ENCODE measurements at regions of chr4 and their contacts with region 1.

Region 1: GRCh38 chr4:145732895-145733880 is 53.2 kb downstream of the C4orf51 start:
- DNase-seq: peak; percentile 95
- H3K4me3 ChIP-seq: peak overlapping the region; percentile 45 to 60
- H3K27ac ChIP-seq: peak overlapping the region; percentile 97 to 98
- H3K4me1 ChIP-seq: peaks cover 30% of the 10 kb centered on the region
- H3K27me3 ChIP-seq: no peaks in the 10 kb centered on the region
- CTCF ChIP-seq: peak in 2 of 4 experiments; percentile 31 to 37
- POLR2A ChIP-seq: peak; percentile 75

Region 2: DNA sequence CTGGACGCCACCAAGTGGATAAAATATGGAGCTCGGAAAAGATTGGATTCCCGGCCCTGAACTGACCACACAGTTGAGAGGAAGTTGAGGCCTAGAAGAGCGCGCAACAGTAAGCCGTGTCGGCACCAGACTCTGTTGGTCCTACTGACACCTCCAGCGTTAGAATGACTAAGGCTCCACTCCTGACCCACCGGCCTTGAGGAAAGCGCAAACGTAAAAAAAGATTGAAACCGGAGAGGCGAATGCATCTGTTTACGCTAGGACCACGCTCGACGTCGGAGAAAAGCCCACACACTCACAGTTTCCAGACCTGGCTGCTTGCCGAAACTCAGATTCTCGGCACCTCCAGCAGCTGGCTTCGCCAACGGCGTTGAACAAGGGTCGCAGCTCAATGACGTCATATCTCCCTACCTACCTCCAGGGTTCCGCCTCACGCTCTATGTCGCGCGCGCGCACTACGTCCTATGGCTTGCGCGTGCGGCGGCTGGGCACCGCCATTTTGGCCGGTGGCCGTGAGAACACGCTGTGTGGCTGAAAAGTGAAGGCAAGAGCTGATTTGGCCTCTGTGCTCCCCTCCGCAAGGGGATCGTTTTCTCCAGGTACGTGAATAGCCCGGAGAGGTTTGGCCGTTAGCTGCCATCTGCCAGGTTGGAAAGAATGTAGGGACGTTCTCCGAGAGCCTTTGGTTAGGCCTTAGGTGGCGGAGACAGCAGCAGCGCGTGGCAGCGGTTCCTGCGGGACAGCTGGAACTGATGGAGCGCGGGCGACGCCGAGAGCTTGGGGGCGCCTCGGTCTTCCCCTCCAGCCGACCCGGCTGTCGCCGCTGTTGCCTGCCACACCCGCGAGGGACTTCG is 635.1 kb before region 1 on chr4 and contains the starts of genes ABCE1 and ANAPC10:
- intact Hi-C with region 1: loop called (anchors 10 kb)
- DNase-seq: peak; percentile 96
- H3K4me3 ChIP-seq: peak within 1 kb of the TSS; percentile 50 to 70
- H3K27ac ChIP-seq: peak within 1 kb of the TSS; percentile 88 to 89
- H3K4me1 ChIP-seq: peaks cover 4% of the 10 kb centered on the region
- H3K27me3 ChIP-seq: no peaks in the 10 kb centered on the region
- CTCF ChIP-seq: peak in 1 of 4 experiments; percentile 3
- POLR2A ChIP-seq: no peak
- total RNA-seq, gene ABCE1: 41.1 to 61.0 TPM
- total RNA-seq, gene ANAPC10: 22.3 to 31.4 TPM

Region 3: GRCh38 chr4:145154573-145154972 is 578.6 kb before region 1 on chr4:
- intact Hi-C with region 1: no loop called
- DNase-seq: no peak
- H3K4me3 ChIP-seq: no peak overlapping the region
- H3K27ac ChIP-seq: no peak overlapping the region
- H3K4me1 ChIP-seq: no peaks in the 10 kb centered on the region
- H3K27me3 ChIP-seq: no peaks in the 10 kb centered on the region
- CTCF ChIP-seq: peak in 2 of 4 experiments; percentile 13 to 17
- POLR2A ChIP-seq: no peak

Region 4: DNA sequence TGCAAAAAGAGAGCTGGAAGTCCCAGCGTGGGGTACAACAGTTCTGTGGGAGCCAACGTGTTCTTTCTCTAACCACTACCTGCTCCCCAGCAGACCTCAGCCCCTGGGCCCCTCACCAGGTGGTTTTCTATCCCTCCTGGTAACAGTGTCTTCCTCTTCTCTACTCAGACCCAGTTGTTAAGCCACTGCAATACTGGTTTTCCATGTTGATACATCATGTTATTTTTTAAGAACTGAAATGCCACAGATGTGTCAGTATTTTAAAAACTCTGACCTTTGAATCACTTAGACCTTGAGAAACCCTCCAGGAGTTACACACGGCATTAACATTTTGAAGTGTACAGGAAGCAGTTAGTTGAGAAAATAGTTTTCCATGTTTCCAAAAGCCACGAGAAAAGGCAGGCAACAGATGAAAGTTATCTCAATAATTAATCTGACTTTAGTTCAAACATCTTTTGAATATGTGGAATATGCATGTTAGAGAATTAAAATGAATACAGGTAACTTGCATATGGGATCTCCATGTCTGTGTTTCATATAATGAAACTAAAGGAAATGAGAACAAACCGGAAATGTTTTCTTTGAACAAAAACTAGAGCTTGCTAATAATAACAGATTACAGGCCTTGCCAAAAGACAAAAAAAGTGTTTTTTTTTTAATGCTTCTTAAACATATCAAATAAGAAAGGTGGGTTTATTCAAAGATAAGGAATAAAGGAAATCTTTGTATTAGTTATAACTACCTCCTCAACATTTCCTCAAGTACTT is 96.6 kb after region 1 on chr4:
- intact Hi-C with region 1: loop called (anchors 10 kb)
- DNase-seq: no peak
- H3K4me3 ChIP-seq: no peak overlapping the region
- H3K27ac ChIP-seq: no peak overlapping the region
- H3K4me1 ChIP-seq: no peaks in the 10 kb centered on the region
- H3K27me3 ChIP-seq: no peaks in the 10 kb centered on the region
- CTCF ChIP-seq: no peak
- POLR2A ChIP-seq: no peak

Region 5: DNA sequence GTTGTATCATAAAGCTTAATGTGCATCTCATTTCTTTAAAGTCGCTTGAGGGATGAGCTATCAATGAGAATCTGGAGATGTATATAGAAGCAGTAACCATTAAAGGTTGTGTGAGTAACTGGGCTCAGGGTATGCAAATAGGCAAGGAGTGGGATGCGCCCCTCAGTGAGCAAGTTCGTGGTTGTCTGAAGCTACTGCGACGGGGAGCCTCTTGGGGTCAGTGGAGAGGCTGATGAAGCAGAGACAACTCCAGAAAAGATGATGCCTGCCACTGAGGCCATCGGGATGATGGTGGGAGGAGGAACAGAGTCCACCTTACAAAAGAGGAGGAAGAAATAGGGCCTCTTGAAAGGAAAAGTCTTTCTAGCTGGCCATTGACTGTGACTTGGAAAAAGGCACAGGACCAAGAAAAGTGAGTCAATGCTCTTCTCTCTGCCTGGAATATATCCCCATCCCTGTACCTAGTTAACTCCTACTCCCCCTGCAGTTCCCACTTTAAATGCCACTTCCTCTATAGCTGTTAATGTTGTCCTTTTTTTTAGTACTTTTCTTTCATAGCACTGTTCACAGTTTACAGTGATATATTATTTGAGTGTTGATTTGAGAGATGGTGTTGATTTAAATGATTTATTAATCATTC is 391.0 kb after region 1 on chr4:
- intact Hi-C with region 1: no loop called
- DNase-seq: no peak
- H3K4me3 ChIP-seq: no peak overlapping the region
- H3K27ac ChIP-seq: no peak overlapping the region
- H3K4me1 ChIP-seq: no peaks in the 10 kb centered on the region
- H3K27me3 ChIP-seq: no peaks in the 10 kb centered on the region
- CTCF ChIP-seq: no peak
- POLR2A ChIP-seq: no peak